ENCODE measurements at regions of chr3 and their contacts with region 1.

Region 1: GRCh38 chr3:143644370-143645089 is 203.7 kb downstream of the SLC9A9 start:
- DNase-seq: no peak
- H3K4me3 ChIP-seq: no peak overlapping the region
- H3K27ac ChIP-seq: no peak overlapping the region
- H3K4me1 ChIP-seq: peaks cover 0 to 14% (median 11%) of the 10 kb centered on the region in 4 donors
- H3K27me3 ChIP-seq: no peaks in the 10 kb centered on the region
- CTCF ChIP-seq: peak; percentile 62 to 69 (median 68)
- EP300 ChIP-seq: no peak
- POLR2A ChIP-seq: no peak

Region 2: GRCh38 chr3:143433787-143434378 is 210.6 kb before region 1 on chr3:
- intact Hi-C with region 1: loop called (anchors 5 kb)
- DNase-seq: no peak
- H3K4me3 ChIP-seq: no peak overlapping the region
- H3K27ac ChIP-seq: no peak overlapping the region
- H3K4me1 ChIP-seq: peaks cover 0 to 10% (median 7%) of the 10 kb centered on the region in 4 donors
- H3K27me3 ChIP-seq: no peaks in the 10 kb centered on the region
- CTCF ChIP-seq: peak in 2 of 3 experiments; percentile 9 to 35
- EP300 ChIP-seq: no peak
- POLR2A ChIP-seq: no peak